ENCODE measurements at regions of chr10 and their contacts with region 1.

Region 1: GRCh38 chr10:110643653-110644597 is at the start of gene RBM20:
- DNase-seq: peak; percentile 55
- ATAC-seq: peak; percentile 53
- H3K4me3 Mint-ChIP-seq: peak within 1 kb of the TSS; percentile 80
- H3K27ac Mint-ChIP-seq: no peak within 1 kb of the TSS
- H3K4me1 Mint-ChIP-seq: peaks cover 31% of the 10 kb centered on the region
- H3K27me3 Mint-ChIP-seq: peaks cover 55% of the 10 kb centered on the region
- CTCF ChIP-seq: no peak
- total RNA-seq, gene RBM20: 0.37 to 0.52 TPM (median 0.41 TPM) in 3 replicates

Region 2: GRCh38 chr10:110176141-110177030 is 467.5 kb before region 1 on chr10:
- CTCF ChIA-PET with region 1: no interaction called
- POLR2A ChIA-PET with region 1: no interaction called
- DNase-seq: no peak
- ATAC-seq: peak; percentile 36; the same call in 1 of the 2 replicates
- H3K4me3 Mint-ChIP-seq: peak overlapping the region; percentile 41
- H3K27ac Mint-ChIP-seq: no peak overlapping the region
- H3K4me1 Mint-ChIP-seq: peaks cover 31% of the 10 kb centered on the region
- H3K27me3 Mint-ChIP-seq: peaks cover 81% of the 10 kb centered on the region
- CTCF ChIP-seq: no peak

Region 3: DNA sequence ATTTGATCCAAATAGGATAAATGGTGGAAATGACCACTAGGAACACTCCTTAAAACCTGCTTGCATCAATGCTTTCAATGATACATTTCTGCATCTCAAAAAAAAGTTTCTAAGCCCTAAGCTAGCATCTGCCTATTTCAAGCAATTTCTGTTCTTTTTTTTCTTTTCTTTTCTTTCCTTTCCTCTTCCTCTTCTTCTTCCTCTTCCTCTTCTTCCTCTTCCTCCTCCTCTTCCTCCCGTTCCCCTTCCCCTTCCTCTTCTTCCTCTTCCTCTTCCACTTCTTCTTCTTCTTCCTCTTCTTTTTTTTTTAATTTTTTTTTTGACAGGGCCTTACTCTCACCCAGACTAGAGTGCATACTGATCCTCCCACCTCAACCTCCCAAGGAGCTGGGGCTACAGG is 15.6 kb after region 1 on chr10:
- CTCF ChIA-PET with region 1: no interaction called
- POLR2A ChIA-PET with region 1: no interaction called
- DNase-seq: no peak
- ATAC-seq: no peak
- H3K4me3 Mint-ChIP-seq: no peak overlapping the region
- H3K27ac Mint-ChIP-seq: no peak overlapping the region
- H3K4me1 Mint-ChIP-seq: peaks cover 7% of the 10 kb centered on the region
- H3K27me3 Mint-ChIP-seq: peaks cover 4% of the 10 kb centered on the region
- CTCF ChIP-seq: no peak

Region 4: GRCh38 chr10:110671788-110672579 is 28.1 kb after region 1 on chr10:
- CTCF ChIA-PET with region 1: interaction called, 10 read pairs
- POLR2A ChIA-PET with region 1: interaction called, 3 read pairs
- DNase-seq: peak; percentile 80
- ATAC-seq: peak; percentile 85
- H3K4me3 Mint-ChIP-seq: peak overlapping the region; percentile 66
- H3K27ac Mint-ChIP-seq: no peak overlapping the region
- H3K4me1 Mint-ChIP-seq: peaks cover 26% of the 10 kb centered on the region
- H3K27me3 Mint-ChIP-seq: peaks cover 77% of the 10 kb centered on the region
- CTCF ChIP-seq: peak; percentile 34; the same call in 1 of the 2 replicates

Region 5: DNA sequence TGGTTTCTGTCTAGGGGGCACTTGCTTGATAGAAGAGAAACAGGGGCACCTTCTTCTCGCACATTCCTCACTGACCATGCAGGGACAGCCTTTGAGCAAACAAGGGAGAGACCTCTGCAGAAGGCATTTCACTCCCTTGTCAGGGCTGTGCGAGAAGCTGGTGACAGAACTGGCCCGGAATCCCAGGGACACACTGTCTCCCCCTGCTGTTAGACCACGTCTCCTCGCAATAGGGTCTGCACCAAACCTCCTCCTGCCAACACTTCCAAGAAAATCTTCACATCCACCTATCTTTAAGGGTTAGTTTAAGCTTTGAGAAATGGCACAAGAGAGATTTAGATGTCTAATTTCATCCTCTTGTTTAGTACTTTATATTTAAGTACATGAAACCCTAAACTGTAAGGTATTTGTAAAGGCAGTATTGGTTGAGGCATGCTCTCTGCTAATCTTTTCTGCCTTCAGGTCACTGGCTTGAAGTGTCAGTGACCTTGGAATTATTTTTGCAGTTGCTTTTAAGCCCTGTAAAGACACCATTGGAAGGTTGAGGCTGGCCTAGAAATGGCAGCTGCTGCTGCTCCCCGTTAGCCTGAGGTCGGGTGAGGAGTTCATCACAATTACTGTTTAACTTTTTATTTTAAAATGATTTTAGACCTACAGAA is 37.2 kb after region 1 on chr10:
- CTCF ChIA-PET with region 1: interaction called, 13 read pairs
- POLR2A ChIA-PET with region 1: no interaction called
- DNase-seq: peak; percentile 65
- ATAC-seq: peak; percentile 90
- H3K4me3 Mint-ChIP-seq: no peak overlapping the region
- H3K27ac Mint-ChIP-seq: no peak overlapping the region
- H3K4me1 Mint-ChIP-seq: peaks cover 48% of the 10 kb centered on the region
- H3K27me3 Mint-ChIP-seq: no peaks in the 10 kb centered on the region
- CTCF ChIP-seq: peak; percentile 46; the same call in 1 of the 2 replicates

Region 6: DNA sequence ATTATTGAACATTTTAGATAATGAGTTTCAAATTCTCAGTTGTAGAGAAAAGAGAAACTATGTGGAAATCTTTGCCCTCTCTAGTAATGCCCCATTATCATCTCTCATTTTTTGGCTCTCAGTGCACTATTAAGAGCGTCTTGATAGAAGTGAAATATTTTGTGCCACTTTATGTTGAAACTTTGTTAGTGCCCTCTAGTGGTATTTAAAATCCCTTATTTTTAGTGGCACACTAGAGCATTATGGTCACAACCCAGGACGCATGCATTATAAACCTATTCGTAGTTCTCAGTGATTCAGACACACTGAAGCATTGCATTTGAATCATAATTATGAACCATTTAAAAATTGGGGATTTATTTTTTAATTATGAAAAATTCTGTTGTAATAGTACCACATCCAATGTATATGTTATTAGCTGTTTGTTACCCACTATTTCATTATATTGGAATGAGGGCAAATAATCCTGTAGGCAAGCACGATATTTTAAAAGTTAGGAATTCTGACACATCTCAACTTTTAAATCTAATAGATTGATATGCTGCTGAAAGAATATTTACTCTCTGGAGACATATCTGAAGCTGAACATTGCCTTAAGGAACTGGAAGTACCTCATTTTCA is 249.7 kb after region 1 on chr10:
- CTCF ChIA-PET with region 1: no interaction called
- POLR2A ChIA-PET with region 1: no interaction called
- DNase-seq: no peak
- ATAC-seq: peak; percentile 60
- H3K4me3 Mint-ChIP-seq: no peak overlapping the region
- H3K27ac Mint-ChIP-seq: no peak overlapping the region
- H3K4me1 Mint-ChIP-seq: no peaks in the 10 kb centered on the region
- H3K27me3 Mint-ChIP-seq: no peaks in the 10 kb centered on the region
- CTCF ChIP-seq: no peak

Measured in WTC11 (cell line).